Activated CD4-positive, alpha-beta T cell treated with anti-CD3 and anti-CD28 coated beads, Interleukin-2, amount 10 ng/mL, durations not matched to agents 24 days and 14 days (primary cell): ENCODE measurements at regions of chr6 and their contacts with region 1.

Region 1: GRCh38 chr6:35710241-35710847 is 21.6 kb upstream of the FKBP5 start:
- DNase-seq: peak; percentile 70
- H3K4me3 Mint-ChIP-seq: peak overlapping the region; percentile 3
- H3K27ac Mint-ChIP-seq: peak overlapping the region; percentile 60
- H3K4me1 Mint-ChIP-seq: peaks cover 29% of the 10 kb centered on the region
- H3K27me3 Mint-ChIP-seq: no peaks in the 10 kb centered on the region

Region 2: DNA sequence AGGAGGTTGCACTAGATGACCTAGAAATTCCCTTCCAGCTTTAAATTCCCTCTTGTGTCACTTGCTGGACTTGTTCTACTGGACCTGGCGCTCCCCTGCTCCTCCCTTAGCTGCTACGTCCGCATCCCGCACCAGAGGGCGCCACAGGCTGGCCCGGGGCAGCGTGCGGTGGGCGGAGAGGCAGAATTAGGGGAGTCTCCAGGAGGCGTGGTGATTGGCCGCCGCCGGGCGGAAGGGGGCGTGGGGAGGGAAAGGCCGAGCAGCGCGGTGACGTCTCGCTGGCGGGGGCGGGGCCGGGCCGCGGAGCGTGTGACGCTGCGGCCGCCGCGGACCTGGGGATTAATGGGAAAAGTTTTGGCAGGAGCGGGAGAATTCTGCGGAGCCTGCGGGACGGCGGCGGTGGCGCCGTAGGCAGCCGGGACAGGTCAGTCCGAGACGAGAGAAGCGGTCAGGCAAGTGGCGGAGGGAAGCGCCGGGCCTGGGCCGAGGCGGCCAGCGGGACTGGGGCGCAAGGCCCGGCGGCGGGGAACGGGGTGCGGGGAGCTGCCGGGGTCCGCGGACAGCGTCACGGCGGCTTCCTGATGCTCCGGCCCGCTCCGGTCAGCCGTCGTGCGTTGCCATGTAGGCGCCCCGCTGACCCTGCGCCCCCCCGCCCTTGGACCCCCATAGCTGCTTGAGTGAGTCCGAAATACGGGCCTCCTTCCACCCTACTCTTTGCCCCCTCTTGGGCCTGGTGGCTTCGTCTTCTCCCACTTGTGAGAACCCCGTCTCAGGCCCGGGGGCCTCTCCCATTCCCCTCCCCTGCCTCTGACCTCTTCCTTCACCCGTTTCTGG is 367.9 kb before region 1 on chr6 and contains the start of gene PPARD:
- intact Hi-C with region 1: no loop called
- DNase-seq: peak; percentile 100
- H3K4me3 Mint-ChIP-seq: peak within 1 kb of the TSS; percentile 96
- H3K27ac Mint-ChIP-seq: peak within 1 kb of the TSS; percentile 91
- H3K4me1 Mint-ChIP-seq: peaks cover 40% of the 10 kb centered on the region
- H3K27me3 Mint-ChIP-seq: peaks cover 2% of the 10 kb centered on the region
- total RNA-seq, gene PPARD: 19.0 TPM in 2 replicates

Region 3: GRCh38 chr6:35519344-35520011 is 190.9 kb before region 1 on chr6:
- intact Hi-C with region 1: no loop called
- DNase-seq: no peak
- H3K4me3 Mint-ChIP-seq: no peak overlapping the region
- H3K27ac Mint-ChIP-seq: no peak overlapping the region
- H3K4me1 Mint-ChIP-seq: peaks cover 14% of the 10 kb centered on the region
- H3K27me3 Mint-ChIP-seq: peaks cover 2% of the 10 kb centered on the region

Region 4: DNA sequence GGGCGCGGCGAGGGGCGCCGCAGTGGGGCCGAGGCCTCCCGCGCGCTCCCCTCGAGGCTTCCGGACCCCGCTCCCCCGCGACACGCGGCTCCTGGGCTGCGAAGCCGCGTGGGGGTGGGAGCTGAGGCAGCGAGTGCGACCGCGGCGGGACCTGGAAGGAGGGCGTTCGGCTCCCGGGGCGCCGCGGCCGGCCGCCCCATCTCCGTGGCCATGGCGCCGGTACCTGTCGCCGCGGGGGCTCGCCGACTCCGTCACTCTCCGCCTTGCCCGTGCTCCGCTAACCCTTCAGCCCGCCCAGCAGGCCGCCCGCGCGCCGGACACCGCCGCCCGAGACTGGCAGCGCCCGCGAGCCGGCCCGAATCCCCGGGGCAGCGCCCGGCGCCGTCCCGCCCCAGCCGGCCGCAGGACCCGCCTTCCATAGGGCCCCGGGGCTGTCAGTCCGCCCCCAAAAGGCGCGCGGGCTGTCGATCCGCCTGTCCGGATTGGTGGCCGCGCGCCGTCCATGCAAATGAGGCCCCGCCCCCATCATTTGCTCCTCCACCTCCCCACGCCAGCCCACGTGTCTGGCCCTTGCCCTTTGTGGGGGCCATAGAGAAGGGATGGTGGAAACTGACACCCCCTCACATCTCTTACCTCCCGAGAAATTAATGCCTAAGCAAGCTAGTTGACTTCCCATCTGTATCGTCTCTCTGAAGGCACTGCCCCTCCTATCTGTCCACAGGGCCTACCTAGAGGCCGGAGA is 21.6 kb before region 1 on chr6 and contains the start of gene FKBP5:
- intact Hi-C with region 1: loop called (anchors 2 kb)
- DNase-seq: peak; percentile 97
- H3K4me3 Mint-ChIP-seq: peak within 1 kb of the TSS; percentile 93
- H3K27ac Mint-ChIP-seq: peak within 1 kb of the TSS; percentile 92
- H3K4me1 Mint-ChIP-seq: peaks cover 15% of the 10 kb centered on the region
- H3K27me3 Mint-ChIP-seq: no peaks in the 10 kb centered on the region
- total RNA-seq, gene FKBP5: 85.0 and 85.1 TPM in 2 replicates

Region 5: DNA sequence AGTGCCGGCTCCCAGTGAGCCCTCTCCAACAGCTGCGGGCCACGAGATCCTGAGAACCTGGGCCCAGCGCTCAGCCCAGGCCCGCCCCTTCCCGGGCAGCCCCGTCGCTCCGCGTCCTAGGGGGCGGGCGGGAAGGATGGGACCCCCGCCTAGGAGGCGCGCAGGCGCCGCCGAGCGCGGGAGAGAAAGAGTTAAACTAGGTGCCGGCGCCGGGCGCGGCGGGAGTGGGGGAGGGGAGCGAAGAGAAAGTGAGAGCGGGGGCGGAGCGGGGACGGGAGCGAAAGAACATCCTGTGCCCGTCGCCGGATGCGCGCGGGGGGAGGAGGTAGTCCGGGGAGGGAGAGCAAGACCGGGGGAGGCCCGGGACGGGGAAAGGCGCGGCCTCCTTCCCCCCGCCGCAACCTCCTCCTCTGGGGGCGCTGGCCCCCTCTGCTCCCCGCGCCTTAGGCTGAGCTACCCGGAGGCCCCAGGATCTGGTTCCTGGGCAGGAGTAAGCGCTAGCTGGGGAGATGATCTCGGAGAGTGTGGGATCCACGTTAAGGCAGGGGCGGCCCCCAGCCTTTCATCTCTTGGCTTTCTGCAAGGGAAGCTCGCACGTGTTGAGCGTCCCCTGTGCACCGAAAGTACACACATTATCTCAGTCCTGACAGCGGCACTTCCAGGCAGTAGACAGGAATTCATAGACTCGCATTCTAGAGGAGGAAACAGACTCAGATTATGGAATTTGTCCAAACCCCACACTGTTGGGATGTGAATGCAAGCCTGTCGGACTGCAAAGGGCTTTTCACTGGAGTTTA is 21.6 kb after region 1 on chr6:
- intact Hi-C with region 1: loop called (anchors 1 kb)
- DNase-seq: peak; percentile 98
- H3K4me3 Mint-ChIP-seq: peak overlapping the region; percentile 90
- H3K27ac Mint-ChIP-seq: peak overlapping the region; percentile 94
- H3K4me1 Mint-ChIP-seq: peaks cover 56% of the 10 kb centered on the region
- H3K27me3 Mint-ChIP-seq: no peaks in the 10 kb centered on the region